Panc1 (cell line): ENCODE measurements at regions of chr7 and their contacts with region 1.

Region 1: DNA sequence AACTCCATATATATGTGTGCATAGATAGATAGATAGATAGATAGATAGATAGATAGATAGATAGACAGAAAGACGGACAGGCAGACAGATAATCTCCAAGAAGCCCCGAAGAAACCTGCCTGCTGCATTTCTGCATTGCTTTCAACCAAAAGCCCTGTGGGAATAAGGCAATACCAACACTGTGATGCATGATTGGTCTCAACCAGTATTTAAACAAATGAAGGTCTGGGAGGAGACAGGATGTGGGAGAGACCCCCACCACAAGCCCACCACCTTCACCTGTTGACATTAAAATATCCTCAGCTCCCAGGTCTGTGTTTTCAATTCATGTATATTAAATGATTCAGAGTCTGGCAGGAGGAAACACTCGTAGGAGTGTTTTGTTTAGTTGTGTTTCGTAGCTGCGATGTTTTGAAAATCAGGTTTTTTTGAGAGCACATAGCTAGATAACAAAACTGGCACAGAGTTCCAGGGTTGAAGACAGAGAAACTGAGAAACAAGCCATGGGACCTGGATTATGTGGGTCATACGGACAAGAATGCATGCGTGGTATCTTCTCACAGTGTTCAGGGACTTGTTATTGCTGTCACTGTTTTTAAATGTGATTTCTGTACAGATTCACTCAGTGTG is 200.7 kb upstream of the AHR start:
- DNase-seq: no peak
- ATAC-seq: no peak
- H3K4me3 ChIP-seq: no peak overlapping the region
- H3K27ac ChIP-seq: peak overlapping the region; percentile 7; the same call in 1 of the 2 replicates
- H3K4me1 ChIP-seq: 0 out of 2 replicates have a peak, but pooled peaks cover 3% of the 10 kb centered on the region
- H3K27me3 ChIP-seq: no peaks in the 10 kb centered on the region
- CTCF ChIP-seq: no peak

Region 2: DNA sequence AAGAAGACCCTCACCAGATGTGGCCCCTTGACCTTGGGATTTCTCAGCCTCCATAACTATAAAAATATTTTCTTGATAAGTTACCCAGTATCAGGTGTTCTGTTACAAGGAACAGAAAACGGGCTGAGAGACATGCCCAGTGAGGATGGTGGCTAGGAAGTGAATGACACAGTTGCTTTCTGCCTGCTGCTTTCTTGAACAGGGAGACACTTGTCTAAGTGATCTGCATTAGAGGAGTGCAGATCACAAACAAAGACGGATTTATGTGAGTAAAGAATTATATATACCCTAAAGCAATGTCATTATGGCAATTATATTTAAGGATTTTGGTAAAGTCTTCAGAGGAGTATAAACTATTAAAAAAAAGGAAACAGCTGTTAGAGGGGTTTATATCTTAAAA is 31.4 kb after region 1 on chr7:
- CTCF ChIA-PET with region 1: no interaction called
- POLR2A ChIA-PET with region 1: no interaction called
- in situ Hi-C with region 1: no loop called
- intact Hi-C with region 1: loop called (anchors 2 kb)
- DNase-seq: no peak
- ATAC-seq: no peak
- H3K4me3 ChIP-seq: no peak overlapping the region
- H3K27ac ChIP-seq: no peak overlapping the region
- H3K4me1 ChIP-seq: peaks cover 5% of the 10 kb centered on the region; the same call in 1 of the 2 replicates
- H3K27me3 ChIP-seq: no peaks in the 10 kb centered on the region
- CTCF ChIP-seq: no peak